A673 (cell line): ENCODE measurements at regions of chr12 and their contacts with region 1.

Region 1: DNA sequence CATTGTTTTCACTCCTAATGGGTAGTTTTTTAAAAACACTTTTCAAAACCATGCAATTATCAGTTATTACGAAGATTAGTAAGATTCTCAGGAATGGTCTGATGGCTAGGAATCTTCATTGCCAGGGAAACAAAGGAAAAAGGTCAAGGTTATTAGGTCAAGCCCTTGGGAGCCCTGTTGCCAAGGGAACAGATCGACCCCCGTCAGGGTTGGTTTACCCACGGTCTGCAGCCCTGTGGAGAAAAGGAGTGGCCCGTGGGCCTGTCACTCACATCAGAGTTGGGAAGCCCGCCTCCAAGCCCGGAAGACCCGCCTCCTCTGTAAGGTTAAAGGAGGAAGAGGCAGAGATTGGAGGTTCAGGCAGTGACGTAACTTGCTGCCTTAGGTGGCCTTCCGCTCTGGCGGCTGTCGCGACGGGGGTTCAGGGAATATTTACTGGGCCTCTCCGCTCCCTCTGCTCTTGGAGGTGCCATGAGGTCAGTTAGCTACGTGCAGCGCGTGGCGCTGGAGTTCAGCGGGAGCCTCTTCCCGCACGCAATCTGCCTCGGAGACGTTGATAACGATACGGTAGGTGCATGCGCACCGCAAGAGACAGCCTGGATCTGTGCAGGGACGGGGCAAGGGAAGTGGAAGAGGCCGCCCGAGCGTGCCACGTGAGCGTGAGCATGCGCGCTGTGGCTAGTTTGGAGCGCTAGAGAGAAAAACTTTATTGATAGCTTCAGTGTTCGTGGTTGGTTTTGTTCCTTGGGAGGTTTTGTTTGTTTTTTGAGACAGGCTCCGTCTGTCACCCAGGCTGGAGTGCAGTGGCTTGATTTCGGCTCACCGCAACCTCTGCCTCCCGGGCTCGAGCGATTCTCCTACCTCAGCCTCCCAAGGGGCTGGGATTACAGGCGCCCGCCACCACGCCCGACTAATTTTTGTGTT is at the start of gene ITFG2:
- DNase-seq: peak; percentile 99
- H3K4me3 ChIP-seq: peak within 1 kb of the TSS; percentile 60
- H3K27ac ChIP-seq: peak within 1 kb of the TSS; percentile 95
- H3K4me1 ChIP-seq: peaks cover 14% of the 10 kb centered on the region
- H3K27me3 ChIP-seq: no peaks in the 10 kb centered on the region
- CTCF ChIP-seq: no peak
- total RNA-seq, gene ITFG2: 37.8 and 39.2 TPM in 2 replicates

Region 2: GRCh38 chr12:2624543-2625288 is 187.8 kb before region 1 on chr12:
- CTCF ChIA-PET with region 1: no interaction called
- POLR2A ChIA-PET with region 1: no interaction called
- intact Hi-C with region 1: no loop called
- DNase-seq: peak; percentile 85
- H3K4me3 ChIP-seq: no peak overlapping the region
- H3K27ac ChIP-seq: no peak overlapping the region
- H3K4me1 ChIP-seq: peaks cover 11% of the 10 kb centered on the region
- H3K27me3 ChIP-seq: no peaks in the 10 kb centered on the region
- CTCF ChIP-seq: peak; percentile 90

Region 3: GRCh38 chr12:2853626-2854025 is 41.1 kb after region 1 on chr12:
- CTCF ChIA-PET with region 1: no interaction called
- POLR2A ChIA-PET with region 1: interaction called, 20 read pairs
- intact Hi-C with region 1: no loop called
- DNase-seq: peak; percentile 91
- H3K4me3 ChIP-seq: no peak overlapping the region
- H3K27ac ChIP-seq: no peak overlapping the region
- H3K4me1 ChIP-seq: no peaks in the 10 kb centered on the region
- H3K27me3 ChIP-seq: no peaks in the 10 kb centered on the region
- CTCF ChIP-seq: peak; percentile 91